Sigmoid colon (tissue), 7 donors: ENCODE measurements at regions of chr13 and their contacts with region 1.

Region 1: DNA sequence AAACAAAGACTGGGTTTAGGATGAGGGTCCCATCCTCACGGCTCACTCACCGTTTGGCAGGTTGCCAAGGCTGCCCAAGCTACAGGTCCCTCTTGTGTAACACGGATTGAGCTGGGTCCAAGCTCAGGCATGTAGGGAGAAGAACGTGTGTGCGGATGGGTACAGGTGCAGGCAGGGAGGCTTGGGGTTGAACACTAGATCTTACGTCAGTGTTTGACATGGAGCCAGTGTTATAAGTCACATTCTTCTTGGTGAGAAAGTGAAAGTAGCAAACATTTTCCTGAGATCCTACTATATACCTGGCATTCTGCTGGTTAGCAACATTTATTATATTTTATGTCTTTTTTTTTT is 136.8 kb upstream of the RNF113B start:
- DNase-seq: no peak
- H3K4me3 ChIP-seq: no peak overlapping the region
- H3K27ac ChIP-seq: peak overlapping the region in 2 of 4 donors; percentile 72 to 80
- H3K4me1 ChIP-seq: peaks cover 0 to 35% (median 21%) of the 10 kb centered on the region in 4 donors
- H3K27me3 ChIP-seq: no peaks in the 10 kb centered on the region
- CTCF ChIP-seq: no peak
- EP300 ChIP-seq: no peak
- POLR2A ChIP-seq: no peak

Region 2: DNA sequence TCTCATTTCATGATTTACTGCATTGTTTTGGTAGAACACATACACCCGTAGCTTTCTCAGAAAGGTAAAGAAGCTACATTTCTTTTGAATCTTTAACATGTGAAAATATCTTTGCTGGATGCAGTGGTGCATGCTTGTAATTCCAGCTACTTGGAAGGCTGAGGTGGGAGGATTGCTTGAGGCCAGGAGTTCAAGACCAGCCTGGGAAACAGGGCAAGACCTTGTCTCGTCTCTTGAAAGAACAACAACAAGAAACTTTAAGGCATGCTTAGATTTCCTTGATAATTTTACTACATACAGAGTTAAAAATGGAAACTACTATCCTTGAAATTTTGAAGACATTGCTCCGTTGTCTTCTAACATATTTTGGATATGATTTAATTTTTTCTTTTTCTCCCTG is 144.6 kb before region 1 on chr13:
- intact Hi-C with region 1: no loop called
- DNase-seq: no peak
- H3K4me3 ChIP-seq: no peak overlapping the region
- H3K27ac ChIP-seq: no peak overlapping the region
- H3K4me1 ChIP-seq: peaks cover 0 to 34% (median 31%) of the 10 kb centered on the region in 4 donors
- H3K27me3 ChIP-seq: no peaks in the 10 kb centered on the region
- CTCF ChIP-seq: no peak
- EP300 ChIP-seq: no peak
- POLR2A ChIP-seq: no peak

Region 3: DNA sequence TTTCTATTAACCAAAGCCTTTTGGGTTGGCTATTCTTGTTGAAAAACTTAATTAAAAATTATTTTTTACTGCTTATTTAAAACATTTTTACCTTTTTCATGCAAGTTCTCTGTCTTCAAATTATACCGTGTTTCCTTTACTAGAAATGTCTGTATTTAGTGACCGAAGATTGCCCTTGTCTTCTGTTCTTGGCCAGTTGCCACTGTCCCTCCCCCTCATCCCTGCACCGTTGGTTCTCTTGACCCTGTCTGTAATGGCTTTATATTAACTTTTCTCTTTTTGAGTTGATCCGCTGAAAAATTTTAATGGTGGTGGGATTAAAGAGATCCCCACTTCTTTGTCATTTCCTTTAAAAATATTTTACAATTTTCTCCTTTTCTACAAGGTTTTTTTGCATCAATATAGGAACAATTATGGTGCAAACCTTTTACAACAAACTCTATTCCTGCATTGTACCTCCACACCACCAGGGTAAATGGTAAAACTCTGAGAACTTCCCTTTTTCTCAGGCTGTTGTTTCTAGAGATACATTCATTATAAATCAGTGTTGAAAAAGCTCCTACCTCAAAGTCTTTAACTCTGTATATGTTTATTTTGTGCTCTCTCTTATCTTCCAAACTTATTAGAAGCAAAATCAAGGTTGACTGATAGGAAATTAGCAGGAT is 123.9 kb before region 1 on chr13:
- intact Hi-C with region 1: loop called (anchors 5 kb)
- DNase-seq: no peak
- H3K4me3 ChIP-seq: no peak overlapping the region
- H3K27ac ChIP-seq: peak overlapping the region in 2 of 4 donors; percentile 69 to 74
- H3K4me1 ChIP-seq: peaks cover 0 to 61% (median 42%) of the 10 kb centered on the region in 4 donors
- H3K27me3 ChIP-seq: no peaks in the 10 kb centered on the region
- CTCF ChIP-seq: peak in 1 of 4 experiments; percentile 39
- EP300 ChIP-seq: no peak
- POLR2A ChIP-seq: no peak